ENCODE measurements at regions of chr2 and their contacts with region 1.

Region 1: DNA sequence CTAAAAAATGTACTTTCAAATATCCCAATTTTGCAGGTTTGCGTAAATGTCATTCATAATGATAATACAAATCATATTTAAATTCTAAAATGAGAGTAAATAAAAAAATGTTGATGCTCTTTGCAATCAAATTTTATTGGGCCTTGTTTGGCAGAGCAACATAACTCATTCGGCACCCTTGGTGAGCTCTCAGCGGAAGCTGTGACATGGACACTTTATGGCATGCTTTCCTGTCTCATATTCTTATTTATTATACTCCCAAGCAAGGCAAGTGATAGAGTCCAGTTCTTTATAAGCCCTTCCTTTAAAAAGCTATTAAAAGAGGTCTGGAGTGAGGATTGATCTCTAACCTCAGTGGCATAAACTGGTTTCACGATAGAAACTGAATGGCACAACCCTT is 1493.2 kb upstream of the NXPH2 start:
- DNase-seq: no peak
- ATAC-seq: no peak
- H3K4me3 ChIP-seq: no peak overlapping the region
- H3K4me3 Mint-ChIP-seq: no peak overlapping the region
- H3K27ac ChIP-seq: no peak overlapping the region
- H3K27ac Mint-ChIP-seq: no peak overlapping the region
- H3K4me1 ChIP-seq: no peaks in the 10 kb centered on the region
- H3K4me1 Mint-ChIP-seq: no peaks in the 10 kb centered on the region
- H3K27me3 ChIP-seq: no peaks in the 10 kb centered on the region
- H3K27me3 Mint-ChIP-seq: no peaks in the 10 kb centered on the region

Region 2: DNA sequence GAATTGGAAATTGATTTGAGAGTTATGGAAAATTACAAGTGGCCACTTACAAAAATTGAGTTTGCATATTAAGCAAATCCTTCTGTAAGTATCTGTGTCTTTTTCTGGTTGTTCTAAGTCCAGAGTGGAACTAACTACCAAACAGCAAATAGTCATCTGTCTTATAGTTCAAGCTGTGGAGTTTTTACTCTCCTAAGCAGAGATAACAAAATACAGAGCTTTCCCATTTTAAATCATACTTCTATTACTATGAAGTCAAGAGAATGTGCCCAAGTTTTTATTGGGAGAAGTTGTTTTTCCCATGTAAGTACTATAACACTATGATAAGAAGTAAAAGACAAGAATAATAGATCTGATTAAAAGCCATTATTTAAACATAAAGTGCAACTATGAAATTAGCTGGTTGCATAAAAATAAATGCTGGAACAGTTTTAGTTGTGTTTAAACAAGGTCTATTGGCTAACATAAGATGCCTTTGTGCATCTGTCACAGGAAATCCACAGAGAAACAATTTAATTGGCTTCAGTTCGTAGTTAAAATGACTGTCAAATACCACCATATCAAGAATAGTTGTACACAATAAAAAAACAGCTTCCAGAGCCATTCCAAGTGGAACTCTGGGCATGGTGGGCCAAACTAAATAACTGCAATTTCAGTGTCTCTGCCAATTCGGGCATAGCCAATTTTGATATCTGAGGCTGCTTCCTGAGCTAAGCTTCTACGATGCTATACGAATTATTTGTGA is 25.8 kb before region 1 on chr2:
- CTCF ChIA-PET with region 1: no interaction called
- POLR2A ChIA-PET with region 1: no interaction called
- intact Hi-C with region 1: loop called in 1 of 2 experiments (anchors 2 kb)
- DNase-seq: no peak
- ATAC-seq: no peak
- H3K4me3 ChIP-seq: no peak overlapping the region
- H3K4me3 Mint-ChIP-seq: no peak overlapping the region
- H3K27ac ChIP-seq: no peak overlapping the region
- H3K27ac Mint-ChIP-seq: no peak overlapping the region
- H3K4me1 ChIP-seq: no peaks in the 10 kb centered on the region
- H3K4me1 Mint-ChIP-seq: no peaks in the 10 kb centered on the region
- H3K27me3 ChIP-seq: no peaks in the 10 kb centered on the region
- H3K27me3 Mint-ChIP-seq: no peaks in the 10 kb centered on the region

Region 3: GRCh38 chr2:140667203-140667602 is 393.8 kb after region 1 on chr2:
- CTCF ChIA-PET with region 1: no interaction called
- POLR2A ChIA-PET with region 1: no interaction called
- intact Hi-C with region 1: no loop called
- DNase-seq: no peak
- ATAC-seq: no peak
- H3K4me3 ChIP-seq: no peak overlapping the region
- H3K4me3 Mint-ChIP-seq: no peak overlapping the region
- H3K27ac ChIP-seq: no peak overlapping the region
- H3K27ac Mint-ChIP-seq: no peak overlapping the region
- H3K4me1 ChIP-seq: no peaks in the 10 kb centered on the region
- H3K4me1 Mint-ChIP-seq: no peaks in the 10 kb centered on the region
- H3K27me3 ChIP-seq: no peaks in the 10 kb centered on the region
- H3K27me3 Mint-ChIP-seq: no peaks in the 10 kb centered on the region

Measured in naive thymus-derived CD4-positive, alpha-beta T cell (primary cell).